Activated CD4-positive, alpha-beta T cell treated with anti-CD3 and anti-CD28 coated beads, Interleukin-2, amount 10 ng/mL, durations not matched to agents 24 days and 14 days (primary cell): ENCODE measurements at regions of chr16 and their contacts with region 1.

Region 1: DNA sequence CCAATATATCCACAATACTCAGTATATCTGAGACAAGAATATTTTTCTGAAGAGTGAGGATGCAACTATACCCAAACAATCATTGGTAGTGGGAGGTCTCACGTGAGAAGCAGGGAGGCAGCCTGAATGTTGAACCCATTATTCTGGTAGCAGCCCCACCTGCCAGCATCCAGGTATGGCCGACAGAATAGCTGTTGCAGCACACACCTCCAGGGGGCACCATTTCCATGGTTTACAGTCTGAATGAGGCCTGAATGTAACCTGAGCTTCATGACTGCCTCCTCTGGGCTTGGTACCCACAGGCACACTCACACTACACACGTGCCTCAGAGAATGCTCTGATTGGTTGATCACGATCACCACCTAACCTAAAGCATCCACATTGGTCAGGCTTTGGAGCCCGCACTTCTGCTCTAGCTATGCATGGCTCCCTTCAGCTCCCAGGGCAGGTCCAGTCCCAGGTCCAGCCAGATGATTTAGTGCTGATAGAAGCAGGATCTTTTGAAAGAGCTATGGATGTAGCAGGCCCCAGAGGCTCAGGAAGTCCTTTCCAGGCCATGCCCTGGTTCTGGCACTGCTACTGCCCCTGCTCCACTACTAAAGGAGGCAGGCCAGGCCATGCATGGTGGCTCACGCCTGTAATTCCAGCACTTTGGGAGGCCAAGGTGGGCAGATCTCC is 11.0 kb upstream of the CBFB start:
- DNase-seq: peak; percentile 97
- H3K4me3 Mint-ChIP-seq: no peak overlapping the region
- H3K27ac Mint-ChIP-seq: no peak overlapping the region
- H3K4me1 Mint-ChIP-seq: peaks cover 38% of the 10 kb centered on the region
- H3K27me3 Mint-ChIP-seq: no peaks in the 10 kb centered on the region

Region 2: DNA sequence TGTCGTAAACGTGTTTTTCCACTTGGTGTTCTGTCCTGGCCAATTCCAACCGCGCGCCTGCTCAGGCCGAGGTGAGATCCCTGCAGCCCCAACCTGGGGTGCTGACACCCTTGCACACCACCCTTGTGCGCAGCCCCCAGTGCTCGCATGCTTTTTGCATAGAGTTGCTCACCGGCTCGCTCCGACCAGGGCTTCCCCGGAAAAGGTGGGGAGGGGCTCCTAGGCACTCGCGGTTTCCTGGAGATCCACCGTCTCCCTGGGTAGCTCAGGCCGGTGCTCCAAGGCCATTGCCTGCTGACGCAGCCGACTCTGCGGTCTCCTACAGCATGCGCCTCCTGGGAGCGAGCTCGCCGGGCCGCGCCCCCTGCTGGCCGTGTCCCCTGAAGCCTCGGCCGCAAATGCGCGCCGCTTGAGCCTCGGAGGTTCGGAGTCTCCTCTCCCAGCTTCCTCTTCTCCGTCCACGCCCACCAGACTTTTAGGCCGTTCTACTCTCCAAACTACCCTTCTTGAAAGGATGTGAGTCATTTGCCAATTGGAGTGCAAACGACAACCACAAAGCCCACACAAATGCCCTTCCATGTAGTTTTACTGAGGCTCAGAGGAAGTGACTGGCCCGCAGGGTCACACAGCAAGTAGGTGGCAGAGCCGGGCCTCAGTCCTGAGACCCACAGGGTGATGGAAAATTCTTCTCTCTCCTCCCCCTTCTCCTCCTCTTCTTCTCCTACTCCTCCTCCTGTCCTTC is 144.8 kb before region 1 on chr16:
- intact Hi-C with region 1: no loop called
- DNase-seq: peak; percentile 97
- H3K4me3 Mint-ChIP-seq: peak overlapping the region; percentile 87
- H3K27ac Mint-ChIP-seq: peak overlapping the region; percentile 94
- H3K4me1 Mint-ChIP-seq: peaks cover 47% of the 10 kb centered on the region
- H3K27me3 Mint-ChIP-seq: no peaks in the 10 kb centered on the region

Region 3: GRCh38 chr16:66977341-66978113 is 40.4 kb before region 1 on chr16:
- intact Hi-C with region 1: loop called (anchors 1 kb)
- DNase-seq: peak; percentile 97
- H3K4me3 Mint-ChIP-seq: peak overlapping the region; percentile 22
- H3K27ac Mint-ChIP-seq: peak overlapping the region; percentile 85
- H3K4me1 Mint-ChIP-seq: peaks cover 49% of the 10 kb centered on the region
- H3K27me3 Mint-ChIP-seq: no peaks in the 10 kb centered on the region

Region 4: DNA sequence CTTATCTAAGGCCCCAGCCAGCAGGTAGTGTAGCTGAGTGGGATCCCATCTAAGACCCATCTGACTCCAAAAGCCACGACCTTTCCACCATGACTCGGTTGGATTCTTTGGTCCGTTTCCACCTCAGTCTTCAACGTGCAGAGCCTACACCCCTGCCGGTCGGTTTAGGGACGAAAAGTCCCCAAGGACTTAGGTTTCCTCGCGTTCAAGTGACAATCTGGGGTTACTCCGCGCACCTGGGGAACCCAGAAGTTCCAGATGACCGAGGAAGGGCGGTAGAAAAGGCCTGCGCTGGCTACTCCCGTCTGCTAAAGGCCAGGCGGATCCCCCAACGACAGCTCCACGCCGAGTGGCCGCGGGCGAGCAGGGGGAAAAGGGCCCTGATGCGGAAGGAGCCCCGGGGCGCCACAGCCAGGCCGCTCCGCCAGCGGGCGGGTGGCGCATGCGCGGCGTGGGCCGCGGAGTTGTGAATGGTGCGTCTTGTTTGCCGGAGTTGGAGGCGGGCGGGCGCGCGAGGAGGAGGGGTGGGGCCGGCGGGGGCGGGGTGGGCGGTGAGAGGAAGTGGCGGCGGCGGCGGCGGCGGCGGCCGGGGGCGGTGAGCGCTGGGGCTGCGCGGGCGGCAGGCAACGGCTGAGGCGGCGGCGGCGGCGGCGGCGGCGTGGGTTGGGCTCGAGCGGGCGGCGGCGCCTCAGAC is 10.8 kb after region 1 on chr16 and contains the start of gene CBFB:
- intact Hi-C with region 1: loop called (anchors 1 kb)
- DNase-seq: peak; percentile 98
- H3K4me3 Mint-ChIP-seq: peak within 1 kb of the TSS; percentile 96
- H3K27ac Mint-ChIP-seq: peak within 1 kb of the TSS; percentile 95
- H3K4me1 Mint-ChIP-seq: peaks cover 53% of the 10 kb centered on the region
- H3K27me3 Mint-ChIP-seq: no peaks in the 10 kb centered on the region
- total RNA-seq, gene CBFB: 163 and 172 TPM in 2 replicates

Region 5: GRCh38 chr16:67040906-67041305 is 23.0 kb after region 1 on chr16:
- intact Hi-C with region 1: no loop called
- DNase-seq: peak; percentile 48
- H3K4me3 Mint-ChIP-seq: no peak overlapping the region
- H3K27ac Mint-ChIP-seq: peak overlapping the region; percentile 30
- H3K4me1 Mint-ChIP-seq: peaks cover 36% of the 10 kb centered on the region
- H3K27me3 Mint-ChIP-seq: no peaks in the 10 kb centered on the region

Region 6: GRCh38 chr16:67100569-67101310 is 82.8 kb after region 1 on chr16:
- intact Hi-C with region 1: loop called (anchors 1 kb)
- DNase-seq: no peak
- H3K4me3 Mint-ChIP-seq: no peak overlapping the region
- H3K27ac Mint-ChIP-seq: no peak overlapping the region
- H3K4me1 Mint-ChIP-seq: no peaks in the 10 kb centered on the region
- H3K27me3 Mint-ChIP-seq: no peaks in the 10 kb centered on the region

Region 7: DNA sequence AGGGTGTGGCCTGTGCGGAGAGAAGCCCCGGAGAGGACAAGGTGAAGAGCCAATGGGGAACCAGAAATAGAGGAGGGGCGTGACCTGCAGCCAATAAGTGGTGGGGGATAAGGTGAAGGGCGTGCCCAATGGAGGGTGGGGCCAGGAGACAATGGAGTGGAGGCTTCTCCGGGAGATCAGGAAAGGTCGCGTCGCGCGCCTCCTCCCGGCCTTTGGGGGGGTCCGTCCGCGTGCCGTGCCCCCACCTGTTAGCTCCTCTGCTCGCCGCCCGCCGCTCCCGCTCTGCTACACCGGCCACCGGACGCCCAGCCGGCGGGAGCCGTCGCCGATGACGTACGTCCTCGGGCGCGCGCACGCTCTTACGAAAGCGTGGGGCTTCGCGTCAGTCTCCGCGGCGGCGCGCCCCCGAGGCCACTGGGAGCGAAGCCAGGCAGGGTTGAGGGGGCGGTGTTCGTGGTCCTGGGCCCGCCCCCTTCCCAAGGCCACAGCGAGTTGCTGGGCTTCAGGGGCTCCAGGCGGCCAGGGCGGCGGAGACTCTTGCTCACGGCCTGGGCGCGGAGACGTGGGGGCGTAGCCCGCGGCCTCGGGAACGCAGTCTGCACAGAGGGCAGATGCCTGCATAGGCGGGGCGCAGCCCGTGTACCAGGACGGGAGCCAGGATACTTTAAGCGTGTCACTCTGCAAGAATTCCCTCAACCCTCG is 165.8 kb after region 1 on chr16 and contains the start of gene MATCAP1:
- intact Hi-C with region 1: loop called (anchors 1 kb)
- DNase-seq: peak; percentile 98
- H3K4me3 Mint-ChIP-seq: no peak within 1 kb of the TSS
- H3K27ac Mint-ChIP-seq: peak within 1 kb of the TSS; percentile 45
- H3K4me1 Mint-ChIP-seq: peaks cover 19% of the 10 kb centered on the region
- H3K27me3 Mint-ChIP-seq: peaks cover 8% of the 10 kb centered on the region
- total RNA-seq, gene MATCAP1: 51.3 and 55.1 TPM in 2 replicates